ENCODE measurements at regions of chr6 and their contacts with region 1.

Region 1: GRCh38 chr6:132279592-132280139 is 121.6 kb downstream of the MOXD1 start:
- DNase-seq: peak; percentile 90
- H3K4me3 ChIP-seq: peak overlapping the region in 7 of 8 donors; percentile 22 to 64 (median 37)
- H3K27ac ChIP-seq: no peak overlapping the region
- H3K4me1 ChIP-seq: peaks cover 0 to 11% (median 0%) of the 10 kb centered on the region in 6 donors
- H3K27me3 ChIP-seq: peaks cover 0 to 6% (median 0%) of the 10 kb centered on the region in 7 donors
- CTCF ChIP-seq: peak; percentile 55 to 92 (median 81)
- POLR2A ChIP-seq: no peak

Region 2: GRCh38 chr6:132190097-132190814 is 89.4 kb before region 1 on chr6:
- intact Hi-C with region 1: no loop called
- DNase-seq: no peak
- H3K4me3 ChIP-seq: no peak overlapping the region
- H3K27ac ChIP-seq: peak overlapping the region in 1 of 8 donors; percentile 12
- H3K4me1 ChIP-seq: no peaks in the 10 kb centered on the region
- H3K27me3 ChIP-seq: no peaks in the 10 kb centered on the region
- CTCF ChIP-seq: no peak
- POLR2A ChIP-seq: no peak

Region 3: GRCh38 chr6:132247381-132248159 is 32.1 kb before region 1 on chr6:
- intact Hi-C with region 1: no loop called
- DNase-seq: no peak
- H3K4me3 ChIP-seq: no peak overlapping the region
- H3K27ac ChIP-seq: no peak overlapping the region
- H3K4me1 ChIP-seq: no peaks in the 10 kb centered on the region
- H3K27me3 ChIP-seq: no peaks in the 10 kb centered on the region
- CTCF ChIP-seq: no peak
- POLR2A ChIP-seq: no peak

Region 4: GRCh38 chr6:132483779-132484679 is 204.4 kb after region 1 on chr6:
- intact Hi-C with region 1: loop called (anchors 5 kb)
- DNase-seq: no peak
- H3K4me3 ChIP-seq: no peak overlapping the region
- H3K27ac ChIP-seq: peak overlapping the region in 2 of 8 donors; percentile 14 to 54
- H3K4me1 ChIP-seq: peaks cover 16 to 89% (median 64%) of the 10 kb centered on the region in 6 donors
- H3K27me3 ChIP-seq: no peaks in the 10 kb centered on the region
- CTCF ChIP-seq: peak; percentile 32 to 77 (median 70)
- POLR2A ChIP-seq: no peak

Measured in spleen (tissue), 13 donors.